Activated CD4-positive, alpha-beta T cell treated with anti-CD3 and anti-CD28 coated beads for 36 hours (primary cell): ENCODE measurements at regions of chr7 and their contacts with region 1.

Region 1: GRCh38 chr7:111486472-111487142 is 75.7 kb downstream of the IMMP2L start:
- DNase-seq: no peak
- ATAC-seq: peak; percentile 44
- H3K4me3 Mint-ChIP-seq: no peak overlapping the region
- H3K27ac Mint-ChIP-seq: no peak overlapping the region
- H3K4me1 Mint-ChIP-seq: no peaks in the 10 kb centered on the region
- H3K27me3 Mint-ChIP-seq: no peaks in the 10 kb centered on the region

Region 2: DNA sequence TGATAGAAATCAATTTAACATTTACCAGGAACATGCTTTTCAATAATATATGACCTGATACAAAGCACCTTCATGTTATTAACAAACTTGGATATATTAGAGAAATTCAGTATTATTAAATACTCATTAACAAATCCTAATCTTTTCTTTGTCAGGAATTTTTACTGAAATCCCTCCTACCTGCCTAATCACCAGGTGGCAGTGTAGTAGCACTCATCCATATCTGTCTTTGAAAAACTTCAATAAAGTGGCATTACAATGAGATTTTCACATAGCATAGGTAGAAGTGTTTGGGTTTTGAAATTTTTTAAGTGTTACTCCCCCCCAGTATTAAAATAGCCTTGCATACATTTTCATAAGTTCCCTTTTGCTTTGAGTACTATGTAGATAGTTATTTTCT is 1642.2 kb before region 1 on chr7:
- CTCF ChIA-PET with region 1: no interaction called
- POLR2A ChIA-PET with region 1: no interaction called
- intact Hi-C with region 1: loop called in 1 of 2 experiments (anchors 1 kb)
- DNase-seq: no peak
- ATAC-seq: no peak
- H3K4me3 Mint-ChIP-seq: no peak overlapping the region
- H3K27ac Mint-ChIP-seq: no peak overlapping the region
- H3K4me1 Mint-ChIP-seq: no peaks in the 10 kb centered on the region
- H3K27me3 Mint-ChIP-seq: no peaks in the 10 kb centered on the region

Region 3: DNA sequence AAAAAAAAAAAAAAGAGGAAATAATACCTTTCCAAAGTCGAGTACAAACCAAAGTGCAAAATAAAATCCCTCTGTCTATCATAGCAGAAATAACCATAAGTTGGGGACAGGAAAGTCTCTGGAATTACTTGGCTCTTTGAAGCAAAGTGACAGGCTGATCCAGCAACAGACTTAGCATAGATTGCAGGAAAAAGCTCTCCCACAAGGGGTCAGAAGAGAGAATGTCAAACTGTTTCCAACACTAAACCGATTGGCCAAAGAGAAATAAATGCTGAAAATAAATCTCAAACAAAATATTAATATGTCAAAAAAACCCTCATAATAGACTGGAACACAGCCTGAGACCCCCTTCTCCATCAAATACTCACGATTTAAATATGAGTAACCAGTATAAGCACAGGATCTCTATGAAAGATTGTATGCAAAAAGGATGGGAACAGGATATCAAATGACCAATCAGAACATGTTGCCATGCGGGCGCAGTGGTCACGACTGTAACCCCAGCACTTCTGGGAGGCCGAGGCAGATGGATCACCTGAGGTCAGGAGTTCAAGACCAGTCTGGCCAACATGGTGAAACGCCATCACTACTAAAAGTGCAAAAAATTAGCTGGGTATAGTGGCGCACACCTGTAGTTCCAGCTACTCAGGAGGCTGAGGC is 1396.4 kb before region 1 on chr7:
- CTCF ChIA-PET with region 1: no interaction called
- POLR2A ChIA-PET with region 1: no interaction called
- intact Hi-C with region 1: loop called (anchors 10 kb)
- DNase-seq: no peak
- ATAC-seq: no peak
- H3K4me3 Mint-ChIP-seq: no peak overlapping the region
- H3K27ac Mint-ChIP-seq: no peak overlapping the region
- H3K4me1 Mint-ChIP-seq: no peaks in the 10 kb centered on the region
- H3K27me3 Mint-ChIP-seq: peaks cover 3% of the 10 kb centered on the region

Region 4: DNA sequence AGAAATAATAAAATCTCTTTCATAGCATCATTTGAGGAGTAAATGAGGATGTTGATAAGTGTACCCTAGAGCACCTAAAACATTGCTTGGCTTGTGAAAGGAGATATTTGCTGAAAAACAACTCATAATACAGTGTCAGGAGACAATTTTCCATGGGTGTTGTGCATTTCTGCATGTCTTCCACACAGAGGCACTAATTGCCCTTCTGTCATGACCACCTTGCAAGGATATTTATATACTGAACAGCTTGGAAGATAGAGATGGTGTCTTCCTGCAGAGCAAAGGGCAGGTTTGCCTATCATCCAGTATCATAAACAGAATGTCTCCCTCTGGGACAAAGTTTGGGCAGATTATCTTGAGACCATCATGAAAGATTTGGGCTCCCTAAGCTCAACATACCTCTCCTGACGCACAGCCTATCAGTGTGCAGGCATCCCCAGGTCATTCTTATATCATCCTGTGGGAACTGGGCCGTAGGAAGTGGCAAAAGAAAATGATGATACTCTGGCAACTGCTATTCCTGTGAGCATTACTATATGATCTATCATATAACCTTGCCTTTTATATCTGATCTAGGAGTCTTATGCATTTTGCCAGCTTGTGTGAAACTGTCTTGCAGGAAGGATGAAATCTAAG is 890.8 kb before region 1 on chr7:
- CTCF ChIA-PET with region 1: no interaction called
- POLR2A ChIA-PET with region 1: no interaction called
- intact Hi-C with region 1: loop called (anchors 5 kb)
- DNase-seq: no peak
- ATAC-seq: no peak
- H3K4me3 Mint-ChIP-seq: no peak overlapping the region
- H3K27ac Mint-ChIP-seq: no peak overlapping the region
- H3K4me1 Mint-ChIP-seq: no peaks in the 10 kb centered on the region
- H3K27me3 Mint-ChIP-seq: no peaks in the 10 kb centered on the region

Region 5: GRCh38 chr7:111089822-111090426 is 396.7 kb before region 1 on chr7:
- CTCF ChIA-PET with region 1: no interaction called
- POLR2A ChIA-PET with region 1: no interaction called
- intact Hi-C with region 1: loop called (anchors 2 to 5 kb)
- DNase-seq: no peak
- ATAC-seq: no peak
- H3K4me3 Mint-ChIP-seq: no peak overlapping the region
- H3K27ac Mint-ChIP-seq: peak overlapping the region; percentile 80
- H3K4me1 Mint-ChIP-seq: peaks cover 86% of the 10 kb centered on the region
- H3K27me3 Mint-ChIP-seq: no peaks in the 10 kb centered on the region

Region 6: GRCh38 chr7:111730476-111731300 is 244.1 kb after region 1 on chr7:
- CTCF ChIA-PET with region 1: no interaction called
- POLR2A ChIA-PET with region 1: no interaction called
- intact Hi-C with region 1: loop called in 1 of 2 experiments (anchors 5 kb)
- DNase-seq: peak; percentile 13
- ATAC-seq: peak; percentile 72
- H3K4me3 Mint-ChIP-seq: no peak overlapping the region
- H3K27ac Mint-ChIP-seq: no peak overlapping the region
- H3K4me1 Mint-ChIP-seq: no peaks in the 10 kb centered on the region
- H3K27me3 Mint-ChIP-seq: peaks cover 2% of the 10 kb centered on the region